CD4-positive, alpha-beta T cell (primary cell): ENCODE measurements at regions of chr5 and their contacts with region 1.

Region 1: GRCh38 chr5:138775034-138775433 is 21.8 kb downstream of the CTNNA1 start:
- DNase-seq: no peak
- ATAC-seq: no peak
- H3K4me3 ChIP-seq: no peak overlapping the region
- H3K4me3 Mint-ChIP-seq: no peak overlapping the region
- H3K27ac ChIP-seq: no peak overlapping the region
- H3K27ac Mint-ChIP-seq: no peak overlapping the region
- H3K4me1 ChIP-seq: no peaks in the 10 kb centered on the region
- H3K4me1 Mint-ChIP-seq: no peaks in the 10 kb centered on the region
- H3K27me3 ChIP-seq: no peaks in the 10 kb centered on the region
- H3K27me3 Mint-ChIP-seq: peaks cover 28% of the 10 kb centered on the region
- CTCF ChIP-seq: no peak

Region 2: GRCh38 chr5:138491669-138492559 is 283.1 kb before region 1 on chr5:
- CTCF ChIA-PET with region 1: no interaction called
- POLR2A ChIA-PET with region 1: no interaction called
- intact Hi-C with region 1: no loop called
- DNase-seq: peak; percentile 73 to 94 (median 82)
- ATAC-seq: peak; percentile 99
- H3K4me3 ChIP-seq: peak overlapping the region; percentile 60
- H3K4me3 Mint-ChIP-seq: peak overlapping the region; percentile 90
- H3K27ac ChIP-seq: no peak overlapping the region
- H3K27ac Mint-ChIP-seq: peak overlapping the region; percentile 3
- H3K4me1 ChIP-seq: peaks cover 24% of the 10 kb centered on the region
- H3K4me1 Mint-ChIP-seq: peaks cover 15% of the 10 kb centered on the region
- H3K27me3 ChIP-seq: peaks cover 0 to 17% of the 10 kb centered on the region in 2 experiments
- H3K27me3 Mint-ChIP-seq: peaks cover 18% of the 10 kb centered on the region
- CTCF ChIP-seq: no peak

Region 3: GRCh38 chr5:138725138-138725833 is 49.7 kb before region 1 on chr5:
- CTCF ChIA-PET with region 1: no interaction called
- POLR2A ChIA-PET with region 1: no interaction called
- intact Hi-C with region 1: no loop called
- DNase-seq: no peak
- ATAC-seq: no peak
- H3K4me3 ChIP-seq: no peak overlapping the region
- H3K4me3 Mint-ChIP-seq: no peak overlapping the region
- H3K27ac ChIP-seq: no peak overlapping the region
- H3K27ac Mint-ChIP-seq: no peak overlapping the region
- H3K4me1 ChIP-seq: peaks cover 4% of the 10 kb centered on the region
- H3K4me1 Mint-ChIP-seq: peaks cover 6% of the 10 kb centered on the region
- H3K27me3 ChIP-seq: peaks cover 4 to 19% of the 10 kb centered on the region in 2 experiments
- H3K27me3 Mint-ChIP-seq: peaks cover 57% of the 10 kb centered on the region
- CTCF ChIP-seq: no peak

Region 4: GRCh38 chr5:138739938-138740337 is 35.1 kb before region 1 on chr5:
- CTCF ChIA-PET with region 1: no interaction called
- POLR2A ChIA-PET with region 1: no interaction called
- intact Hi-C with region 1: loop called in 1 of 2 experiments (anchors 1 kb)
- DNase-seq: no peak
- ATAC-seq: no peak
- H3K4me3 ChIP-seq: no peak overlapping the region
- H3K4me3 Mint-ChIP-seq: no peak overlapping the region
- H3K27ac ChIP-seq: no peak overlapping the region
- H3K27ac Mint-ChIP-seq: no peak overlapping the region
- H3K4me1 ChIP-seq: no peaks in the 10 kb centered on the region
- H3K4me1 Mint-ChIP-seq: peaks cover 12% of the 10 kb centered on the region
- H3K27me3 ChIP-seq: peaks cover 2 to 17% of the 10 kb centered on the region in 2 experiments
- H3K27me3 Mint-ChIP-seq: peaks cover 20% of the 10 kb centered on the region
- CTCF ChIP-seq: no peak